ENCODE measurements at regions of chr15 and their contacts with region 1.

Region 1: DNA sequence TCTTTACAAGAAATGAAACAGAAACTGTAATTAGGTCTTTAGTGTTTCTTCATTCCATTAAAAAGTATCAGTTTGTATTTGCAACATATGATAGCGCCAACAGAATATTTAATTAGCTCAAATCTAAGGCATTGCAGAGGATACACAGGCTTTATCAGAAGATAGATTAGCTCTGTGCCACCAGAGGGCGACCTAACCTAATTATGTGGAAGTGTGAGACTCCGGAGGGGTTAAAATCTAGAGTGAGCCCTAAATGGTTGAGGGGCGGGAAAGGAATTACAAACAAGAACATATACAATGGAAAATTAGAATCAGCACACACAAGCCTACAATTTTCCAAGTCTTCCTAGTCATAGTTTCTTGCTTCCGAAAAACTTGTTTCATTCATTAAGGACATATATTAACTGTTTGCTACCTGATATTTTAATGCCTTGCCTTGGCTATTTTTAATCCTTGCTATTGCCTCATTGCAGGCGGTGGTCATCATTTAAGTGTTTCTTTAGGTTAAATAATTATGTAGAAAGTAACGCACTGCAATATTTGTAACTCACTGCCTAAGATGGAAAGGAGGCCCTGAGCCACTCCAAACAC is 18.0 kb upstream of the RYR3 start:
- DNase-seq: peak in 5 of 9 donors; percentile 18 to 53 (median 35)
- ATAC-seq: peak; percentile 46
- H3K4me3 ChIP-seq: no peak overlapping the region
- H3K4me3 Mint-ChIP-seq: no peak overlapping the region
- H3K27ac ChIP-seq: no peak overlapping the region
- H3K27ac Mint-ChIP-seq: no peak overlapping the region
- H3K4me1 ChIP-seq: no peaks in the 10 kb centered on the region
- H3K4me1 Mint-ChIP-seq: no peaks in the 10 kb centered on the region
- H3K27me3 ChIP-seq: no peaks in the 10 kb centered on the region
- H3K27me3 Mint-ChIP-seq: peaks cover 0 to 10% (median under 1%) of the 10 kb centered on the region in 5 donors

Region 2: DNA sequence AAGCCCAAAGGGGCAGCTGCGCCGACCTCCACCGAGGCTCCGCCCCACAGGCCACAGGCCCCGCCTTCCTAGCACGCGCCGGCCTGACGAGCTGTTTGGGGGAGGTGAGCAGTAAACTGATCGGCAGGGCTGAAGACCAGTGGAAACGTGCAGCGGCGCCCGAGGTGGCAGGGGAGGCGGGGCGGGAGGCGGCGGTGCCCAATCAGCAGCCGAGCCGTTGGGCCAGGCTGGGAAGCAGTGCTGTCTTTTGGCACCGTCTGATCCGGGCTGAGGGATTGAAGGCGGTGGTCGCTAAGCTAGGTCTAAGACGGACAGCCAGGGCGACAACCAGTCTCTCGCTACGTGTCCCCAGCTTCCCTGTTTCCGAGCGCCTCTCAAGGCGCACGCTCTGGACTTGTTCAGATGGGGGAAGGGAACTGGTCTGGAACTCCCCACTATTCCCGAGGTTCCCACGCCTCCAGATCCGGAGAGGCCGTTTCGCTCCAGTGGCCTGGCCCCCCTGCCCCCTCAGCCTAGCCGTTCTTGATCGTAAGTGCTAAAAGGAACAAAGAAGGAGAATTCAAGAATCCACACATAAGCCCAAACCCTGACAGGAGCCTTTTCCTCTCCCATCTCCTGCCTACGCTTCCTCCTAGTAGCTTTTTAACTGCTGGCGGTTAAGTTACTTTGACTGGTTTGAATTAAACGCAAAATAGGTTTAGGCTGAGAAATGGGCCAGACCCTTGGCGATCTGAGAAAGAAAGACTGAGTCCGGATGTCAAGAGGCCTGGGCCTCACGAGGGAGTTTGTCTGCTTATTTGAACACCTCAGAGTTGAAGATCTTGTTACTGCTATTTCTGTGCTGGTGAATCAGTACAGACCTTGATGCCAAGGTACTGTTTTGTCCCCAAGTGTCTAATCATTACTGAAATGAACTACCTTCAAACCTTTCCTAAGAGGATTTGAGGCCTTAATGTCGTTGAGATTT is 97.8 kb before region 1 on chr15 and contains the start of gene FMN1:
- CTCF ChIA-PET with region 1: no interaction called
- POLR2A ChIA-PET with region 1: no interaction called
- intact Hi-C with region 1: no loop called
- DNase-seq: peak; percentile 61 to 92 (median 84)
- ATAC-seq: peak; percentile 100
- H3K4me3 ChIP-seq: peak within 1 kb of the TSS; percentile 83
- H3K4me3 Mint-ChIP-seq: peak within 1 kb of the TSS; percentile 71 to 92 (median 85)
- H3K27ac ChIP-seq: peak within 1 kb of the TSS; percentile 59
- H3K27ac Mint-ChIP-seq: peak within 1 kb of the TSS in 8 of 9 donors; percentile 77 to 95 (median 82)
- H3K4me1 ChIP-seq: peaks cover 0 to 9% of the 10 kb centered on the region in 2 donors
- H3K4me1 Mint-ChIP-seq: peaks cover 4 to 22% (median 14%) of the 10 kb centered on the region in 7 donors
- H3K27me3 ChIP-seq: no peaks in the 10 kb centered on the region
- H3K27me3 Mint-ChIP-seq: peaks cover 0 to 39% (median 0%) of the 10 kb centered on the region in 5 donors
- total RNA-seq, gene FMN1: 0.02 to 32.2 (median 0.70) TPM

Region 3: DNA sequence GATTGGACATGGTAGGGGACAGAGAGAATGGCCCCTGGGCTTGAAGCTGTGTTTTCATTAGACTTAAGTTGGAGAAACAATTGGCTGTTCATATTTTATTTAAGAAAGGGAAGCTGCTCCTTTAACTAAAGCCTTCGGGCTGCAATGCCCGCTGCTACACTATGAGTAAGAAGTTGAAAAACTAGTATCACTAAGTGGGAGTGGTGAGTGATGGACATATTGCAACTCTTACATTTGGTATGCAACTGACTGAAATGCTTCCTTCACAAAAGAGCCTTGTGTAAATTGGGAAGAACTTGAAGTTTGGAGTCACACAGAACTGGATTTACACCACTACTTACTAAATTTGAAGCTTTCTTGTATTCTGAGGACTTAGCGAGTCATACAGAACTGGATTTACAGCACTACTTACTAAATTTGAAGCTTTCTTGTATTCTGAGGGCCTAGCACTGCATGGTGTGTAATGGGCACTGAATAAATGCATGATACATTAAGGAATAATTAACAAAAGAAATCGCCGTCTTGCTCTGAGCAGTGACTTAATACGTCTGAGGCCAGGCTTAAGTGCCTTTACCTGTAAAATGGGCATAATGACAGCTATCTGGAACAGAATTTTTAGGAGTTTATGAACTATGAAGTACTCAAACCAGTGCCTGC is 167.5 kb after region 1 on chr15:
- CTCF ChIA-PET with region 1: no interaction called
- POLR2A ChIA-PET with region 1: no interaction called
- intact Hi-C with region 1: no loop called
- DNase-seq: no peak
- ATAC-seq: no peak
- H3K4me3 ChIP-seq: no peak overlapping the region
- H3K4me3 Mint-ChIP-seq: no peak overlapping the region
- H3K27ac ChIP-seq: no peak overlapping the region
- H3K27ac Mint-ChIP-seq: no peak overlapping the region
- H3K4me1 ChIP-seq: no peaks in the 10 kb centered on the region
- H3K4me1 Mint-ChIP-seq: no peaks in the 10 kb centered on the region
- H3K27me3 ChIP-seq: peaks cover 0 to 3% of the 10 kb centered on the region in 2 donors
- H3K27me3 Mint-ChIP-seq: peaks cover 0 to 13% (median 0%) of the 10 kb centered on the region in 5 donors

Region 4: GRCh38 chr15:33700695-33701304 is 408.0 kb after region 1 on chr15:
- CTCF ChIA-PET with region 1: no interaction called
- POLR2A ChIA-PET with region 1: no interaction called
- intact Hi-C with region 1: loop called in 1 of 2 experiments (anchors 1 kb)
- DNase-seq: peak in 8 of 9 donors; percentile 16 to 63 (median 48)
- ATAC-seq: peak; percentile 83
- H3K4me3 ChIP-seq: no peak overlapping the region
- H3K4me3 Mint-ChIP-seq: no peak overlapping the region
- H3K27ac ChIP-seq: no peak overlapping the region
- H3K27ac Mint-ChIP-seq: no peak overlapping the region
- H3K4me1 ChIP-seq: no peaks in the 10 kb centered on the region
- H3K4me1 Mint-ChIP-seq: peaks cover 0 to 2% (median 0%) of the 10 kb centered on the region in 7 donors
- H3K27me3 ChIP-seq: no peaks in the 10 kb centered on the region
- H3K27me3 Mint-ChIP-seq: peaks cover 0 to 6% (median 4%) of the 10 kb centered on the region in 5 donors

Measured in naive thymus-derived CD4-positive, alpha-beta T cell (primary cell).